WTC11 (cell line): ENCODE measurements at regions of chr18 and their contacts with region 1.

Region 1: DNA sequence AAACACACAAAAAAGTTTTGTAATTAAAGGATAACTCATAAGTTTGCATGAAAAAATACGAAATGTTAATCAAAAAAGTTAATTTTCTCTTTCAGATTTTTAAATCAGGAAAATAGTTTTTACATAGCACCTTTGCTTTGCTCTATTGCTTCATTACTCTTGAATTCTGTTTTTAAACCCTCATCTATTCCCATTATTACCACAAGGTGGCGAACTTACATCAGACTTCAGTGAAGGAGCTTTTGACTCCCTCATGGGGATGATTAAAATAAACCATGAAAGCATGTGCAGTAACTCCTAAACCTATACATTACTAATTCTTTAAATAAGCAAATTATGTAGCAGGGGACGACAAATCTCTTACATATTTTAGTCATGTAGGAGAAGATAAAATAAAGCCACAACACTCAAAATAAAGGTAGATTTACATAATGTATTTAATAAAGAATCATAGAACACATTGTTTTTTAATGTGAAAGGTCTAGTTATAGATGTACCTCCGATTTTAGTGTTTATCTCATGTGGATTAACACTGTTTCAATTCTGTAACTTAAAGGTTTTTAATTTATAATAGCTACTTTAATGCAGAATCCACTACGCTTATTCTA is 105.2 kb downstream of the NETO1 start:
- DNase-seq: no peak
- ATAC-seq: peak; percentile 44; the same call in 1 of the 2 replicates
- H3K4me3 Mint-ChIP-seq: no peak overlapping the region
- H3K27ac Mint-ChIP-seq: no peak overlapping the region
- H3K4me1 Mint-ChIP-seq: no peaks in the 10 kb centered on the region
- H3K27me3 Mint-ChIP-seq: no peaks in the 10 kb centered on the region
- CTCF ChIP-seq: peak; percentile 65

Region 2: DNA sequence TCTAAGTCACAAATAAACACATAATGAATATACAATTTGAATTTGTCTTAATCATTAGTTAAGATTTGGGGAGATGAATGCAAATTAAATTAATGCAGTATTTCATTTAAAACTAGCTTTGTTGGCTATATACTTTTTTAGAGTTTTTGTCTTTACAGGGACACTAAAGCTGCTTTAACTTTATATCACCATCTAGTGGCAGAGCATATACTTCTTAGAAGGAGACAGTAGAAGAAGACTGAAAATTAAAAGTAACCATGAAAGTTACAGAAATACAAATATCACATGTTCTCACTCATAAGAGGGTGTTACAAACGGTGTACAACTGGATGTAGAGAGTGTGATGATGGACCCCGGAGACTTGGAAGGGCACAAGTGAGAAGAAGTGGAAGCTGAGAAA is 373.5 kb after region 1 on chr18:
- CTCF ChIA-PET with region 1: interaction called, 10 read pairs
- POLR2A ChIA-PET with region 1: no interaction called
- DNase-seq: no peak
- ATAC-seq: no peak
- H3K4me3 Mint-ChIP-seq: no peak overlapping the region
- H3K27ac Mint-ChIP-seq: no peak overlapping the region
- H3K4me1 Mint-ChIP-seq: peaks cover 4% of the 10 kb centered on the region
- H3K27me3 Mint-ChIP-seq: no peaks in the 10 kb centered on the region
- CTCF ChIP-seq: no peak; the same call in 1 of the 2 replicates